ENCODE measurements at regions of chr11 and their contacts with region 1.

Region 1: DNA sequence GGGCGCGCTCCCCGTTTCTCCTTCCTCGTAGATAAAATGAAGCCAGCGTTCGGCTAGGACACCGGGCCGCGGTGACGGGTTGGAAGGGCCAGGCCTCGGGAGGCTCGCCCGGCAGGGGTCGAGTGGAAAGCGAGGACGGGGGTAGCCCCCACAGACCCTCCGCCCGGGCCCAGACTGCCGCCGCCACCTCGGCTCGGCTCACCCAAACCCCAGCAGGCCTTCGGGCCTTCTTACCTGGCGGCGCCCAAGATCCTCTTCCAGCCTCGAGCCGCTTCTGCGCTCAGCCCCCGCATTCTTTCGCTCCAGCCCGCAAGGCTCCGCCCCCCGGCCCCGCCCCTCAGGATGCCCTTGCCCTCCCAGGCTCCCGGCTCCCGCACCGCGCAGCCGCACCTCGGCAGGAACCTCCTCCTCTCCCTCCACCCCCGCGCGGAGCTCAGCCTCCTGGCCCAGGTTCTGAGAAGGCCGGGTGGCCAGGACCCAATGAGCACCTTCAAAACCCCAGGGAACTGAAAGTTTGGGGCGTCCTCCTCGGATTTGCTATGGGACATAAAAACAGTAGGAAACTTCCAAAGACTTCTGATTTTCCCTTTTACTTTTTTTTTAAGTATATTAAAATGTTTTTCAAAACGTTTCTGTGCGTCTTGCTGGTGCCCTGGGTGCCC is at the start of gene CD59:
- DNase-seq: peak; percentile 96 to 98
- H3K4me3 ChIP-seq: peak within 1 kb of the TSS; percentile 61 to 78
- H3K27ac ChIP-seq: peak within 1 kb of the TSS; percentile 86 to 89
- H3K4me1 ChIP-seq: peaks cover 0 to 41% (median 27%) of the 10 kb centered on the region in 4 donors
- H3K27me3 ChIP-seq: no peaks in the 10 kb centered on the region
- CTCF ChIP-seq: no peak

Region 2: DNA sequence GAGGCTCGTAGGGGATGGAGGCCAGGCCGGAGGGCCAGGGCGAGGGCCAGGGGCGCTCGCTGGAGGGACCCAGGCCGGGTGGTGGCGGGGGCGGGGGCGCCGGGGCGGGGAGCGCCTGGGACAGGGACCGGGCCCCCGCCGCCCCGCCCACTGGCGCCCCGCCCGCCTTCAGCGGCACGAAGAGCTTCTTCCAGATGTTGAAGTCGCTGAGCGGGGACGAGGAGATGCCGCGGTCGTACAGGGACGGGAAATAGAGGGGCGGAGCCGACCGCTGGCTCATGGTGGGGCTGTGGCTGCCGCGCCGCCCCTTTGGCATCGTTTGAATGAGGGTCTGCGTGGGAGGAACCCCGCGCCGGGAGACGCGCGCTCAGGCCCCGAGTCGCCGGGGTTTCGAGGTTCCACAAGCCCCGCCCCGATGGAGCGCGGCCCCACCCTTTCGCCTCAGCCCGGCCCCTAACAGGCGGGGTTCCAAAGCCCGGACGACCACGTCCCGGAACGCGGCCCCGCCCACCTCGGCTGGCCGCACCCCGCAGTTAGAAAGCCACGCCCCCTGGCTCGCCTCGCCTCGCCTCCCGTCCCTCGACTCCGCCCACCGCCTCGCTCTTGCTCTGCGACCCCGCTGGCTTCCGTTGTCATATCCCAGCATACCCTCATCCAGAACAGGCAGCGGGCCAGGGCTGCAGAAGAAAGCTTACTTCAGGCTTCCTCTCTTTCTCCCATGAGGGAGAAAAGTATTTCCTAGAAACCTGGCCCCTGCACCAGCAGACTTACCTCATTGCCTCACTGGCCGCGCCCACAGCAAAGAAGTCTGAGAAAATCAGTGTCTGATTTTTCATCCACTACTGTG is 35.6 kb before region 1 on chr11 and contains the start of gene C11orf91:
- intact Hi-C with region 1: loop called (anchors 5 kb)
- DNase-seq: peak; percentile 94 to 95
- H3K4me3 ChIP-seq: peak within 1 kb of the TSS; percentile 51 to 59
- H3K27ac ChIP-seq: peak within 1 kb of the TSS; percentile 45 to 61
- H3K4me1 ChIP-seq: peaks cover 0 to 46% (median 18%) of the 10 kb centered on the region in 4 donors
- H3K27me3 ChIP-seq: no peaks in the 10 kb centered on the region
- CTCF ChIP-seq: no peak

Region 3: DNA sequence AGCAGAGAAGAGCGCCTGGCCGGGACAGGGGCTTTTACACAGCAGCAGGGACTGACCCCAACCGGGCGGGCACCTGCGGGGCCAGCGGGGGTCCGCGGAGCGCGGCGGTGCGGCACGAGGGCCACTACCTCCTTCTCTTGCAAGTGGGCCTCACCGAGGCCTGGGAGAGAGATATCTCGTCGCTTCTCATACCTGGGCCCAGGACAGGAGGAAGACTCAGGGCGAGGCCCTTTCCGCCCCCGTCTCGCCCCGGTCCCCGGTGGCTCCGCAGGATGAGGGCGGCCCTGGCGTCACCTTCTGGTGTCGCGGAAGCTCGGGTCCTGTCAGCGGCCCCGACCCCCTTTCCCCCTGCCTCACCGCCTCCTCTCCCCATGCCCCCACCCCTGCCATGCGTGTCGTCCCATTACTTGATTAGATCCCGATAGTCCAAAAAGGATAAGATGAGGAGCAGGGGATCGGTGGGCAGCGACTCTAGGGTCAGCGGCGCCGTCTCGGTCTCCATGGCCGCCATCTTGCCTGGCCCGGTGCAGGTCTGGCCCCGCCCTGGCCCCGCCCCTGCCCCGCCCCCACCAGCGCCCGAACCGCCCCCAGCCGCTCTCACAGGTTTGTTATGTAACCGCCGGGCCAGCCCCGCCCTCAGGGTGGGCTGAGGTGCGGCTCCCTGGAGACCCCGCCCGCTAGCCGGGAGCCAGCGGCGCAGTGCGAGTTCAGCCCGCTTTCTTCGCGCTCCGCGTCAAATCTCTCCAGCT is 37.9 kb after region 1 on chr11 and contains the start of gene FBXO3:
- intact Hi-C with region 1: loop called (anchors 1 kb)
- DNase-seq: peak; percentile 87 to 92
- H3K4me3 ChIP-seq: peak within 1 kb of the TSS; percentile 97 to 100
- H3K27ac ChIP-seq: peak within 1 kb of the TSS; percentile 90 to 94
- H3K4me1 ChIP-seq: peaks cover 0 to 36% (median 17%) of the 10 kb centered on the region in 4 donors
- H3K27me3 ChIP-seq: no peaks in the 10 kb centered on the region
- CTCF ChIP-seq: no peak